Right ventricle myocardium superior (tissue), 1 donor: ENCODE measurements at regions of chr4 and their contacts with region 1.

Region 1: DNA sequence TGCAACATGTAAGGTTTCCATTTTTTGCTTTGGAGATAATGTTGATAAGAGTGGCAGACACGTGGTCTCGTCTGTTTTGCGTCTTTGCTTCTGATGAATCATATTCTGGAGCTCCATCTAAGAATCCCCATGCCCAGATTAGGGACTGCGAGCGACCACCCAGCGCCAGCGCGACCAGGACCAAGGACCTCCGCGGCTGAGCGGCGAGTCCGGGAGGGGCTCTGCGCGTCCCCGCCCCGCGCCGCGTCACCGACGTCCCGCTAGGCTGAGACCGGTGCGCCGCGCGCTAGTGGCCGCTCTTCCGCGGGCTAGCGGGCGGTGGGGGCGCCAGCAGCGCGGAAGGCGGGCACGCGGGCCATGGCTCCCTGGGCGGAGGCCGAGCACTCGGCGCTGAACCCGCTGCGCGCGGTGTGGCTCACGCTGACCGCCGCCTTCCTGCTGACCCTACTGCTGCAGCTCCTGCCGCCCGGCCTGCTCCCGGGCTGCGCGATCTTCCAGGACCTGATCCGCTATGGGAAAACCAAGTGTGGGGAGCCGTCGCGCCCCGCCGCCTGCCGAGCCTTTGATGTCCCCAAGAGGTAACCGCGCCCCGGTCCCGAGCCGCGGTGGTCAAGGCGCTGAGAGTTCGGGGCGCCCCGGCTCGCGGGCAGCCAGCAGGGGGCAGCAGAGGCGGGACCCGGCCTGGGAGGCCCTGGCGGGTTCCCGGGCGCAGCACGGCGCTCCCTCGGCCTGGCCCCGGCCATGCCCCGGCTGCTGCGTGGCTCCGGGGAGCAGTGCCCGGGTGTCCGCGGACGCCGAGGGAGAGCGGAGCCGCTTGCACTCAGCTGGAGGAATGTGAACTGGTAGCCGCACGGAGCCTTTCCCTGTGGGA is at the start of gene SRD5A3:
- DNase-seq: peak; percentile 93
- ATAC-seq: peak; percentile 99
- total RNA-seq, gene SRD5A3: 8.3 TPM

Region 2: DNA sequence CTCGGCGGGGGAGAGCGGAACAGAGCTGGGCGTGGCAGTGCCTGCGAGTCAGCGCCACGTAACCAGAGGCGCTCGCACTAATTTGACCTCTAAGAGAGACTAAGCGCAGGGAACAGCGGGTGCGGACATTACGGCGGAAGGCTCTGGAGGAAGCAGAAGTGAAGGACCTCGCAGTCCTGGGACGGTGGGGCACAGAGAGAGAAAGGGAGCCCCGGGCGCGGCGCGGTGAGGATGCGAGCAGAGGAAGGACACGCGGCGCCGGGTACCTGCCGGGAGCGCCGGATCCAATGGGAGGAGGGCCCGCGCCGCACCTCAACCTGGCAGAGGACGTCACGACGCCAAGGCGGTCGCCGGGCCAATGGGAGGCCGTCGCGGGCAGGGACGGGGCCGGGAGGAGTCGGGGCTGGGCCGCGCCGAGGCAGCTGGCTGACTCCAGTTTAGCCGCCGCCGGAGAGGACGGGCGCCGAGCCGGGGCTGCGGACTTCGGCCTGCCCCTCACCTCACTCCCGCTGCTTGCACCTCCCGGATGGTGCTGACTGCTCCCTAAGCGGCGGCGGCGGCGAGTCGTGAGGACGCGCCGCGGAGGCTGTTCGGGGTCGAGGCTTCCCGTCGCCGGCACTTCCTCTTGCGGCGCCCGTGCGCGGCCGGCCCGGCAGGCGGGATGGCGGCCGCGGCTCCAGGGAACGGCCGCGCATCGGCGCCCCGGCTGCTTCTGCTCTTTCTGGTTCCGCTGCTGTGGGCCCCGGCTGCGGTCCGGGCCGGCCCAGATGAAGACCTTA is 49.5 kb after region 1 on chr4 and contains the start of gene TMEM165:
- intact Hi-C with region 1: loop called (anchors 5 kb)
- DNase-seq: peak; percentile 94
- ATAC-seq: peak; percentile 98
- total RNA-seq, gene TMEM165: 34.3 TPM

Region 3: GRCh38 chr4:55554453-55555030 is 208.3 kb after region 1 on chr4:
- intact Hi-C with region 1: loop called (anchors 10 kb)
- DNase-seq: no peak
- ATAC-seq: no peak

Region 4: GRCh38 chr4:56296526-56296925 is 950.3 kb after region 1 on chr4:
- intact Hi-C with region 1: no loop called
- DNase-seq: no peak
- ATAC-seq: no peak